ENCODE measurements at regions of chr21 and their contacts with region 1.

Region 1: GRCh38 chr21:17512253-17513213 is at the start of gene CXADR:
- H3K4me3 ChIP-seq: peak within 1 kb of the TSS; percentile 91
- H3K27ac ChIP-seq: peak within 1 kb of the TSS; percentile 95
- H3K4me1 ChIP-seq: peaks cover 6% of the 10 kb centered on the region
- CTCF ChIP-seq: peak; percentile 46; the same call in 1 of the 2 replicates

Region 2: GRCh38 chr21:17270229-17270628 is 242.3 kb before region 1 on chr21:
- CTCF ChIA-PET with region 1: no interaction called
- POLR2A ChIA-PET with region 1: no interaction called
- H3K4me3 ChIP-seq: no peak overlapping the region
- H3K27ac ChIP-seq: no peak overlapping the region
- H3K4me1 ChIP-seq: peaks cover 13% of the 10 kb centered on the region
- CTCF ChIP-seq: no peak

Region 3: DNA sequence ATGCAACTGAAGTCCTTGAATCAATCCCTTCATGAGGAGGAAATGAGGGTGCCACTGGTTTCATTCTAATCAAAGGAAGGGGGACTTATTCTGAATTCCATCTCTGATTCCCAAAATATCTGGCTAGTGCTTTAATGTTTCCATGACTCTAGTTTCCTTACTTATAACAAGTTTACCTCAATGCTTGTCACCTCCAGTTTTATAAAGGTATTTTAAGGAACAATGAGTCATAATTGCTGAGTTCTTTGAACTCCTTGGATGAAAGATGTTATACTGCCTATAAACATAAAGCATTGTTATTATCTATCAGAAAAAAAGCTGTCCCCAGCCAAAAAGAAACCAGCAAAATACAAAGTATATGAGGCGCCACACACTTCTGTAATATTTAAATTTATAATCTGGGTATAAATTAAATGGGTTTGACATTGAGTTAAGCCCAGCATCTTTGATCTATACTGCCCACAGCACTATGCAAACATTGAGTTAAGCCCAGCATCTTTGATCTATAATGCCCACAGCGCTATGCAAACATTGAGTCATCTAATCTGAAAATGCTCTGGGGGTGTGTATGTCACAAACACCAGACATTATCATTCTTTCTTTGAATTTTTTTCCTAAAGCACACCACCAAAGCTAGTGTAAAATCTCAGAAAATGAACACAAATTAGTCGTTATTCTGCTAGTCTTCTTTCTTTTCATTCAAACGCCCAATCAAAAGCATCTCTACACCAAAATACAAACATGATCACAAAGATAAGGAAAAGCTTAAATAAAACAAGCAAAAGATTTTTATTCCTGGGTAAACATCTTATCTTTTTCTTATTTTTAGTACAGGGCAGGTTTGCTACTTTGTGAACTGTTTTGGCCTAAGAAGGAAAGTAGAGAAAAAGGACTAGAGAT is 11.2 kb before region 1 on chr21:
- CTCF ChIA-PET with region 1: interaction called, 13 read pairs
- POLR2A ChIA-PET with region 1: interaction called, 8 read pairs
- H3K4me3 ChIP-seq: no peak overlapping the region
- H3K27ac ChIP-seq: no peak overlapping the region; the same call in 1 of the 2 replicates
- H3K4me1 ChIP-seq: peaks cover 16% of the 10 kb centered on the region
- CTCF ChIP-seq: no peak

Region 4: DNA sequence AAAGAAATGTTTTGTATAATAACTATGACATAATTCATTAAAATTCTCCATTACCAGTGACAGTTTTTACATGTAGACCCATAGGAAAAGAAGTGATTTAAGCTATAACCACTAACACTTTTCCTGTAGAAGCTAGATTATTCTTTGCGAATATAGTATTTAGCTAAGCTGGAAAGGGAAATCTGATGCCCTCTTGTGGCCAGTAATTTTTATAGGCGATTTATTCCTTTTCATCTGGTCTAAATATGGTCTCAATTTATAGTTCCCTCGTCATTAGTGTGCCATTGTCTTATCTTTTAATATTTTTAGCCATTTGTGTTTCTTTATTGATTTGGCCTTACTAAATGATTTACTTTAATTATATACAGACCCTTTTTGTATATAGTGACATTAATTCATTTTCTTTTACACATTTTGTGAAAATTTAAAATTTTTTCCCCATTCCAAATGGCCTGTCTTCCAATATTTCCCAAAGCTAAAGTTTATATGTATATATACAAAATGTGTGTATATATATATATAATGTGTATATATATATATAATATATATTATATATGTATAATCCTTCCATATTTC is 73.4 kb after region 1 on chr21:
- CTCF ChIA-PET with region 1: interaction called, 12 read pairs
- POLR2A ChIA-PET with region 1: interaction called, 3 read pairs
- H3K4me3 ChIP-seq: no peak overlapping the region
- H3K27ac ChIP-seq: no peak overlapping the region
- H3K4me1 ChIP-seq: no peaks in the 10 kb centered on the region
- CTCF ChIP-seq: no peak

Region 5: GRCh38 chr21:17611414-17612022 is 99.0 kb after region 1 on chr21:
- CTCF ChIA-PET with region 1: interaction called, 13 read pairs
- POLR2A ChIA-PET with region 1: interaction called, 6 read pairs
- H3K4me3 ChIP-seq: peak overlapping the region; percentile 66
- H3K27ac ChIP-seq: peak overlapping the region; percentile 82
- H3K4me1 ChIP-seq: peaks cover 9% of the 10 kb centered on the region
- CTCF ChIP-seq: no peak

Region 6: DNA sequence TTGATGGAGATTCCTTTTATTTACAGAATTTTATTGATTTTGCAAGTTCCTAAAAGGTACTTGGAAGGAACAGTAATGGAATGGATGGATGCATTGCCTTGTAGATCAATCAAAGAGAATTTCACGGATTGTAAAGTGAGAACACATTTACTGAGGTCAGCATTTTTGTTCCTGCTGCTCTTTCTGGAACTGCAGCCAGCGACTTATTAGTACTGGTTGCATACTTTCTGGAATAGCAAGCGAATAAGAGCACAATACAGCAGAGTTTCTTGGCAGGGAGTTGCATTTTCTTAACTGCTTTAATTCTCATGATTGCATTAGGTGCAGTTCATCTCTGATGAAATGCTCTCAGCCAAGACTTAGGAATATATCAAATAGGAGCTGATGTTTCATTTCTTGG is 626.0 kb after region 1 on chr21:
- CTCF ChIA-PET with region 1: no interaction called
- POLR2A ChIA-PET with region 1: no interaction called
- H3K4me3 ChIP-seq: no peak overlapping the region
- H3K27ac ChIP-seq: no peak overlapping the region
- H3K4me1 ChIP-seq: peaks cover 5% of the 10 kb centered on the region; the same call in 1 of the 2 replicates
- CTCF ChIP-seq: no peak

Measured in HEK293 (cell line).